PC-3 (cell line): ENCODE measurements at regions of chr5 and their contacts with region 1.

Region 1: GRCh38 chr5:25056836-25057235 is 412.1 kb upstream of the CDH10 start:
- DNase-seq: peak; percentile 58
- ATAC-seq: peak; percentile 99
- H3K4me3 ChIP-seq: no peak overlapping the region
- H3K27ac ChIP-seq: no peak overlapping the region
- H3K4me1 ChIP-seq: peaks cover 12% of the 10 kb centered on the region; the same call in 1 of the 2 replicates
- H3K27me3 ChIP-seq: no peaks in the 10 kb centered on the region
- CTCF ChIP-seq: no peak

Region 2: DNA sequence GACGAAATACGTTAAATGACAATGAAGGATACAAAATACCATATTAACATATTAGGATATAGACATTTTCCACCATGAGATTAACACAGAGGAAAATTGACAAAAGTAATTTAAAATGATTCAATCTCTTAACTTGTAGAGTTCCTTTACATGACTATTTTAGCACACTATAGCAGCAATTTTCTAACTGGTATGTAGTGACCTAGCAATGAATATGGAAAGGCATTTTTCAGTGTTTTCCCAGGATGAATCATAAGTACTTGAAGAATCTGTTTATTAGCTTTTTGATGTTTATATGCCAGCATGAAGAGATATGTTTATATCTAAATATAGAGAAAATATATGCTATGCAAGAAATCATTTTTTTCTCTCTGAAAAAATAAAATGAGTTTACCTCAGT is 370.4 kb after region 1 on chr5:
- CTCF ChIA-PET with region 1: no interaction called
- POLR2A ChIA-PET with region 1: no interaction called
- intact Hi-C with region 1: no loop called
- DNase-seq: peak; percentile 55
- ATAC-seq: peak; percentile 74
- H3K4me3 ChIP-seq: no peak overlapping the region
- H3K27ac ChIP-seq: no peak overlapping the region
- H3K4me1 ChIP-seq: no peaks in the 10 kb centered on the region
- H3K27me3 ChIP-seq: no peaks in the 10 kb centered on the region
- CTCF ChIP-seq: no peak

Region 3: DNA sequence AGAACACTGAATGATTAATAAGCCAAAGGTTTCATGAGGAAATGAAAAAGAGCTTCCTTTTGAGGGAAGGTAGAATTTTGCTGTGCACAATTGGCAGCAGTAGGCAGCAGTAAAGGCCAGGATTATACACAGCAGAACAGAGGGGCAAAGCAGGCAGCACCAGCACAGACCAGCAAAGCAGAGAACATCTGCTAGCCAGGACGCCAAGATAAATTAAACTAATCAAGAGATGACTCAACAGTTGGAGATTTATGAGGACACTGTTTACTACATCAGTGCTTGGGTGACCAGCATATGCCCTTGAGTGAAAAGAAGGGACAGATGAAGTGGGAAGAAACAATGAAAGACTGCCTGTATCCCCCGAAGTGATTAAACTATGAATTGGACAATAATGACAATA is 459.3 kb after region 1 on chr5:
- CTCF ChIA-PET with region 1: no interaction called
- POLR2A ChIA-PET with region 1: no interaction called
- intact Hi-C with region 1: loop called (anchors 10 kb)
- DNase-seq: peak; percentile 39
- ATAC-seq: peak; percentile 94
- H3K4me3 ChIP-seq: no peak overlapping the region
- H3K27ac ChIP-seq: no peak overlapping the region
- H3K4me1 ChIP-seq: no peaks in the 10 kb centered on the region; the same call in 1 of the 2 replicates
- H3K27me3 ChIP-seq: no peaks in the 10 kb centered on the region
- CTCF ChIP-seq: no peak